Activated CD4-positive, alpha-beta T cell treated with anti-CD3 and anti-CD28 coated beads for 36 hours (primary cell): ENCODE measurements at regions of chr6 and their contacts with region 1.

Region 1: GRCh38 chr6:34425498-34426410 is at the start of gene RPS10:
- DNase-seq: peak; percentile 95
- ATAC-seq: peak; percentile 95
- H3K4me3 Mint-ChIP-seq: peak within 1 kb of the TSS; percentile 97
- H3K27ac Mint-ChIP-seq: peak within 1 kb of the TSS; percentile 99
- H3K4me1 Mint-ChIP-seq: peaks cover 35% of the 10 kb centered on the region
- H3K27me3 Mint-ChIP-seq: no peaks in the 10 kb centered on the region
- total RNA-seq, gene RPS10: 2,447 to 2,541 TPM

Region 2: GRCh38 chr6:34182751-34183531 is 242.8 kb before region 1 on chr6:
- CTCF ChIA-PET with region 1: no interaction called
- POLR2A ChIA-PET with region 1: no interaction called
- intact Hi-C with region 1: loop called in 1 of 2 experiments (anchors 5 kb)
- DNase-seq: peak; percentile 78
- ATAC-seq: peak; percentile 95
- H3K4me3 Mint-ChIP-seq: peak overlapping the region; percentile 65
- H3K27ac Mint-ChIP-seq: peak overlapping the region; percentile 95
- H3K4me1 Mint-ChIP-seq: peaks cover 20% of the 10 kb centered on the region
- H3K27me3 Mint-ChIP-seq: no peaks in the 10 kb centered on the region

Region 3: GRCh38 chr6:34248727-34249551 is 176.8 kb before region 1 on chr6 and contains the start of gene SMIM29:
- CTCF ChIA-PET with region 1: interaction called, 3 read pairs
- POLR2A ChIA-PET with region 1: interaction called, 5 read pairs
- intact Hi-C with region 1: loop called (anchors 1 kb)
- DNase-seq: peak; percentile 99
- ATAC-seq: peak; percentile 83
- H3K4me3 Mint-ChIP-seq: peak within 1 kb of the TSS; percentile 76
- H3K27ac Mint-ChIP-seq: peak within 1 kb of the TSS; percentile 85
- H3K4me1 Mint-ChIP-seq: peaks cover 43% of the 10 kb centered on the region
- H3K27me3 Mint-ChIP-seq: no peaks in the 10 kb centered on the region
- total RNA-seq, gene SMIM29: 15.8 to 16.3 TPM

Region 4: GRCh38 chr6:34414999-34415858 is 10.5 kb before region 1 on chr6:
- CTCF ChIA-PET with region 1: interaction called, 9 read pairs
- POLR2A ChIA-PET with region 1: interaction called, 18 read pairs
- intact Hi-C with region 1: no loop called
- DNase-seq: peak; percentile 48
- ATAC-seq: peak; percentile 57
- H3K4me3 Mint-ChIP-seq: no peak overlapping the region
- H3K27ac Mint-ChIP-seq: peak overlapping the region; percentile 51
- H3K4me1 Mint-ChIP-seq: peaks cover 15% of the 10 kb centered on the region
- H3K27me3 Mint-ChIP-seq: no peaks in the 10 kb centered on the region

Region 5: DNA sequence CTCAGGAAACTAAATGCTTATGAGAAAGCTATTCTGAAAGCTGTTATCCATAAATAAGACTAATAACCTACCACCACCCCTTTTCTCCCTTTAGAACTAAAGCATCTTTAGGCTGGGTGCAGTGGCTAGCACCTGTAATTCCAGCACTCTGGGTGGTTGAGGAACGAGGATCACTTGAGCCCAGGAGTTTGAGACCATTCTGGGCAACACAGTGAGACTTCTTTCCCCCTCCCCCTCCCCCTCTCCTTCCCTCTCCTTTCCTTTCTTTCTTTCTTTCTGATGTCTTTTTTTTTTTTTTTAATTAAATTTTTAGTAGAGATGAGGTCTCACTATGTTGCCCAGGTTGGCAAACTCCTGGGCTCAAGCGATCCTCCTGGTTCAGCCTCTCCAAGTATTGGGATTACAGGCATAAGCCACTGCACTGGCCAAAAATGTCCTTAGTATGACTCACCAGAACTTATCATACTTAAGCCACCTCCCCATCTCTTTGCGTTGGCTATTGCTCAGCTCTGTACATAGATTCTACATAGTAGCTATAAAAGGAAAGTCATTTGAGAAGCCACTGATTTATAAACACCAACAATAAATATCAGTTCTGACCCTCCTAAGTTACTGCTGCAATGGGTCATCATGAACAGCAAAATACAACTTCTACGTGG is 185.2 kb after region 1 on chr6:
- CTCF ChIA-PET with region 1: interaction called, 4 read pairs
- POLR2A ChIA-PET with region 1: no interaction called
- intact Hi-C with region 1: loop called in 1 of 2 experiments (anchors 1 kb)
- DNase-seq: no peak
- ATAC-seq: no peak
- H3K4me3 Mint-ChIP-seq: no peak overlapping the region
- H3K27ac Mint-ChIP-seq: no peak overlapping the region
- H3K4me1 Mint-ChIP-seq: peaks cover 8% of the 10 kb centered on the region
- H3K27me3 Mint-ChIP-seq: no peaks in the 10 kb centered on the region

Region 6: DNA sequence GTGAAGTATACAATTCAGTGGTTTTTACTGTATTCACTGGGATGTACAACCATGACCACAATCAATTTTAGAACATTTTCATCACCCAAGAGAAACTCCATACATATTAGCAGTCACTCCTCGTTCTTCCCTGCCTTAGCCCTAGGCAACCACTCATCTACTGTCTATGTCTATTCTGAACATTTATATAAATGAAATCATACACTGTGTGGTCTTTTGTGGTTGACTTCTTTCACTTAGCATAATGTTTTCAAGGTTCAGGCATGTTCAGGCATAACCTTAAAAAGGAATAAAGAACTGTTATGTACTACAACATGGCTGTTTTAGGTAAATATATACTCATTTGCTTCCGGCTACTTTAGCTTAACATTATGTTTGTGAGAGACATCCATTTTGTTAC is 403.4 kb after region 1 on chr6:
- CTCF ChIA-PET with region 1: no interaction called
- POLR2A ChIA-PET with region 1: no interaction called
- intact Hi-C with region 1: no loop called
- DNase-seq: no peak
- ATAC-seq: no peak
- H3K4me3 Mint-ChIP-seq: no peak overlapping the region
- H3K27ac Mint-ChIP-seq: no peak overlapping the region
- H3K4me1 Mint-ChIP-seq: no peaks in the 10 kb centered on the region
- H3K27me3 Mint-ChIP-seq: no peaks in the 10 kb centered on the region

Region 7: DNA sequence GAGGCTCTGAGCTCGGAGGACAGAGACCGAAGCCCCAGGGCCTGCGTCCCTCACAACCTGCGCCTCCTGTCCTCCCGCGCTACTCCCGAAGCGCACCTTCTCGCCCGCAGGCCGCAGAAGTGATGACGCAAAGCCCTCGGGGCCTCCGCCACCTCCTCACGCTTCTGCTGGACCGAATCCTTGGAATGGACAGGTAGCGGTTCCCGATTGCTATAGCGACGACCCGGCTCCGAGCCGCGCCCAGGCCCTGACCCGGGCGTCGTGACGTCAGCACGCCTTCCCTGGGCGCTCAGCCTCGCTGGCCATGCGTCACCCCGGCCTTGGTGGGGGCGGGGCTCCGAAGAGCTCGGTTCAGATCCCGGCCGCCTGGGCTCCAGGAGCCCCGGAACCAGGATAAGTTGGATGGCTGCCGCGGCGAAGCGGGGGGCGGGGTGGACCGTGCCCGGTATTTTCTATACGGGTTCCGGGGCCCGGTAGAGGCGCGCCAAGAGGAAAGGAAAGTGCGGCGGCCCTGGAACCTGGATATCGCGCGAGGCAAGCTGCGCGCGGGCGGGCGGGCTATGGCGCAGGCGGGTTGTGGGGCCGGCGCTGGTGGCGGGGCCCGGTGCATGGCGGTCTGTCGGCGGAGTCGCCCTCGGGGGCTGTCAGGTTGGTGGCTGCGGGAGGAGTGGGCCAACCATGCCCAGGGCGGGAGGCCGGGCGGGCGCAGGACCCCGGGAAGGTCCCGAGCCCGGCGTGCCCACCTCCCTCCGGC is 833.6 kb after region 1 on chr6 and contains the start of gene ZNF76:
- CTCF ChIA-PET with region 1: no interaction called
- POLR2A ChIA-PET with region 1: no interaction called
- intact Hi-C with region 1: loop called in 1 of 2 experiments (anchors 1 kb)
- DNase-seq: peak; percentile 95
- ATAC-seq: peak; percentile 89
- H3K4me3 Mint-ChIP-seq: peak within 1 kb of the TSS; percentile 91
- H3K27ac Mint-ChIP-seq: peak within 1 kb of the TSS; percentile 90
- H3K4me1 Mint-ChIP-seq: peaks cover 45% of the 10 kb centered on the region
- H3K27me3 Mint-ChIP-seq: no peaks in the 10 kb centered on the region
- total RNA-seq, gene ZNF76: 35.2 to 40.1 TPM